WTC11 (cell line): ENCODE measurements at regions of chr2 and their contacts with region 1.

Region 1: GRCh38 chr2:237744613-237745249 is 53.8 kb upstream of the RBM44 start:
- DNase-seq: peak; percentile 86
- ATAC-seq: peak; percentile 82
- H3K4me3 Mint-ChIP-seq: no peak overlapping the region
- H3K27ac Mint-ChIP-seq: peak overlapping the region; percentile 80
- H3K4me1 Mint-ChIP-seq: peaks cover 43% of the 10 kb centered on the region
- H3K27me3 Mint-ChIP-seq: no peaks in the 10 kb centered on the region
- CTCF ChIP-seq: peak; percentile 80

Region 2: GRCh38 chr2:237731663-237732062 is 13.1 kb before region 1 on chr2:
- CTCF ChIA-PET with region 1: interaction called, 13 read pairs
- POLR2A ChIA-PET with region 1: no interaction called
- DNase-seq: no peak
- ATAC-seq: no peak
- H3K4me3 Mint-ChIP-seq: no peak overlapping the region
- H3K27ac Mint-ChIP-seq: no peak overlapping the region
- H3K4me1 Mint-ChIP-seq: peaks cover 80% of the 10 kb centered on the region
- H3K27me3 Mint-ChIP-seq: no peaks in the 10 kb centered on the region
- CTCF ChIP-seq: no peak